GM12878 (cell line): ENCODE measurements at regions of chr17 and their contacts with region 1.

Region 1: DNA sequence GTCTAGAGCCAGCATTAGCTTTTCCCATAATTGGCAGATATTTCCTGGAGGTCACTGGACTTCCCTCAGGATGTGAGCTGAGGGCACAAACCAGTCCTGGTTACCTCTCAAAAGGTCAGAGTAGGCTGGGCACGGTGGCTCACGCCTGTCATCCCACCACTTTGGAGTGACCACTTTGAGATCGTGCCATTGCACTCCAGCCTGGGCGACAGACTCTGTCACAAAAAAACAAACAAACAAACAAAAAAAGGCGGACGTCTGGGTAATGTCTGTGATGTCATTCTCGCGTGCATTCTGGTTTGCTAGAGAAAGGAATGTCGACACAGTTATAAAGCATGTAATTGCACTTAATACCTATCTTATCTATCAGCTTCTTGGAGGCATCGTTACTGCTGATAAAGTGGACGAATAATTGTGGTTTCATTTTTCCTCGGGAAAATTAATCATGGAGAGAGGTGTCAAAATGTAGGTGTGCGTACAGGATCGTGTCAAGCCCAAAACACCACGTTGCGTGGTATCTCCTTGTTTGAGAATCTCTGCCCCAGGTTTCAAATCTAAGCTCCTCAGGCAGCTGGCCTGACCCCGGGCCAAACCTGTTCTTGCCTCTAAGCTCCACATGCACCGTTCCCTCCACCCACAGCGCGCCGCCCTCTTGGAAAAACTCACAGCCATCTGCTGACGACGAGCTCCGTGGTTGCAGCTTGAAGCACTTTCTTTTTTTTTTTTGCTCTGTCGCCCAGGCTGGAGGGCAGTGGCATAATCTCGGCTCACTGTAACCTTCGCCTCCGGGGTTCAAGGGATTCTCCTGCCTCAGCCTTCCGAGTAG is 6.5 kb upstream of the CRK start:
- DNase-seq: no peak
- ATAC-seq: no peak
- H3K4me3 ChIP-seq: no peak overlapping the region; the same call in 1 of the 2 replicates
- H3K27ac ChIP-seq: no peak overlapping the region
- H3K4me1 ChIP-seq: peaks cover 16% of the 10 kb centered on the region
- H3K27me3 ChIP-seq: no peaks in the 10 kb centered on the region
- CTCF ChIP-seq: no peak
- EP300 ChIP-seq: no peak
- POLR2A ChIP-seq: no peak
- RAD21 ChIP-seq: no peak

Region 2: GRCh38 chr17:1431631-1432104 is 30.8 kb before region 1 on chr17:
- CTCF ChIA-PET with region 1: no interaction called
- POLR2A ChIA-PET with region 1: no interaction called
- RAD21 ChIA-PET with region 1: no interaction called
- SMC1A ChIA-PET with region 1: no interaction called
- in situ Hi-C with region 1: no loop called
- intact Hi-C with region 1: no loop called
- DNase-seq: peak; percentile 44
- ATAC-seq: peak; percentile 94
- H3K4me3 ChIP-seq: no peak overlapping the region; the same call in 1 of the 2 replicates
- H3K27ac ChIP-seq: peak overlapping the region; percentile 56
- H3K4me1 ChIP-seq: peaks cover 9% of the 10 kb centered on the region
- H3K27me3 ChIP-seq: no peaks in the 10 kb centered on the region
- CTCF ChIP-seq: no peak
- EP300 ChIP-seq: no peak
- POLR2A ChIP-seq: no peak
- RAD21 ChIP-seq: no peak

Region 3: DNA sequence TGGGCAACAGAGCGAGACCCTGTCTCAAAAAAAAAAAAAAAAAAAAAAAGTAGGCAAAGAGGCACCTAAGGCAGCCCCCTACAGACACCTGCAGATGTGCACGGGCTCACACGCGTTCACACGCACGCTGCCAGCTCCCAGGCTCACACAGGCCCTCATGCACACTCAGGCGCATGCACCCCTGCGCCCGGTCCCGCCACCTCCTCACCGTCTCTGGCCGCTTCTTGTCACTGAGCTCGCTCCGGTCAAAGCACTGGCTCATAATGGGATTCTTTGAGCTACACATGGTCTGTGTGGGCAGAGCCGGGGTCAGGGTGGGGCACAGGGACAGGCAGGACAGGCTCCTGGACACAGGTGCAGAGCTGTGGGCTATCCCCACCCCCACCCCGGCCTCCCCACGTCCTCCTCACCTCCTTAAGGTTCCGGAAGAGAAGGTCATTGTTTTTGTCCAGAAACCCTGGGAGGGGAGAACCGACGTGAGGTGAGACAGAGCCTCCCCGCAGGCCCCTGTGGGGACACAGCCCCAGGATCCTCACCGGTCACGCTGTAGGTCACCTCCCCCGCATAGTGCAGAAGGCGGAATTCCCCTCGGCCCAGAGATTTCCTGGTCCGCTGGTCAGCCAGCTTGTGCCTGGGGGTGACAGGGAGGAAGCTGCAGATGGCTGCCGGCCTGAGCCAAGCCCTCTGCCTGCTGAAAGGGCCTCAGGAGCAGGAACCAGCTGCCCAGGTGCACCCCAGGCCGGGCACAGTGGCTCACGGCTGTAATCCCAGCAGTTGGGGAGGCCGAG is 12.1 kb after region 1 on chr17:
- CTCF ChIA-PET with region 1: interaction called, 5 read pairs
- POLR2A ChIA-PET with region 1: interaction called, 11 read pairs
- RAD21 ChIA-PET with region 1: interaction called, 5 read pairs
- SMC1A ChIA-PET with region 1: interaction called, 4 read pairs
- in situ Hi-C with region 1: no loop called
- intact Hi-C with region 1: no loop called
- DNase-seq: peak; percentile 67
- ATAC-seq: peak; percentile 87
- H3K4me3 ChIP-seq: peak overlapping the region; percentile 63
- H3K27ac ChIP-seq: peak overlapping the region; percentile 54
- H3K4me1 ChIP-seq: peaks cover 27% of the 10 kb centered on the region
- H3K27me3 ChIP-seq: no peaks in the 10 kb centered on the region
- CTCF ChIP-seq: no peak
- EP300 ChIP-seq: peak in 1 of 2 experiments; percentile 59; a peak in 2 of 4 replicates
- POLR2A ChIP-seq: peak; percentile 66
- RAD21 ChIP-seq: no peak

Region 4: DNA sequence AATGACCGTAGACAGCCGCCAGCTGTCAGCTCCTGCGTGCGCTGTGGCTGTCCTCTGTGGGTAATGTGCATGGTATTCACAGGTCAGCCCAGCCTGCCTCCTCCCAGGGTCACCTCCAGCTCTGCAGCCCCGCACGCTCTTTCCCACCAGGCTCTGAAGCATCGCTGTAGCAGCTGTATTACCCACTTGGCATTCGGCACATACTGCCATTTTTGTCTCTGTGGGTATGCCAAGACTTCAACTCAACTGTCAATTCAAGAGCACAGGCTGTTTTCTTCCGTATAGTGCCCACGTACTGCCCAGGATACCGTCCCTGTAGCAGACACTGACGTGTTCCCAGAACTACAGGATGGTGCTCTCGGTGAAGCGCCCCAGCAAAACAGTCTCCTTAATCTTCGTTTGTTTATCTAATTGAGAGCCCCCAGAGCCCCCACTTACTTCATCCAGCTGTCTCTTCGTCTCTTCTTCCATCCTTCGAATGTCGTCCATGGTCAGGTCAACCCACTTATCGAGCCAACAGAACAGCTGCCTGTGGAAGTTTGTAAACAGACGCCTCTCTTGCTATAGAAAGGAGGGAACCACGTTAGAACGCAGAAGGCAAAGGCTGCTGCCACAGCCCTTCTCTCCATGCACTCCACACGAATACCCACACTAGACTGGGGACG is 71.3 kb after region 1 on chr17:
- CTCF ChIA-PET with region 1: no interaction called
- POLR2A ChIA-PET with region 1: no interaction called
- RAD21 ChIA-PET with region 1: no interaction called
- SMC1A ChIA-PET with region 1: no interaction called
- in situ Hi-C with region 1: no loop called
- intact Hi-C with region 1: no loop called
- DNase-seq: no peak
- ATAC-seq: no peak
- H3K4me3 ChIP-seq: no peak overlapping the region
- H3K27ac ChIP-seq: no peak overlapping the region
- H3K4me1 ChIP-seq: no peaks in the 10 kb centered on the region
- H3K27me3 ChIP-seq: no peaks in the 10 kb centered on the region
- CTCF ChIP-seq: no peak
- EP300 ChIP-seq: no peak
- POLR2A ChIP-seq: peak; percentile 7; the same call in 1 of the 2 replicates
- RAD21 ChIP-seq: no peak